Activated naive CD8-positive, alpha-beta T cell treated with anti-CD3 and anti-CD28 coated beads, Interleukin-2, amount 10 ng/mL, durations not matched to agents 7 days and 5 days (primary cell): ENCODE measurements at regions of chr2 and their contacts with region 1.

Region 1: GRCh38 chr2:38653715-38654527 is 12.0 kb upstream of the GALM start:
- DNase-seq: no peak
- ATAC-seq: peak; percentile 53
- H3K4me3 Mint-ChIP-seq: peak overlapping the region; percentile 57
- H3K27ac Mint-ChIP-seq: peak overlapping the region; percentile 91
- H3K4me1 Mint-ChIP-seq: peaks cover 38% of the 10 kb centered on the region
- H3K27me3 Mint-ChIP-seq: no peaks in the 10 kb centered on the region

Region 2: DNA sequence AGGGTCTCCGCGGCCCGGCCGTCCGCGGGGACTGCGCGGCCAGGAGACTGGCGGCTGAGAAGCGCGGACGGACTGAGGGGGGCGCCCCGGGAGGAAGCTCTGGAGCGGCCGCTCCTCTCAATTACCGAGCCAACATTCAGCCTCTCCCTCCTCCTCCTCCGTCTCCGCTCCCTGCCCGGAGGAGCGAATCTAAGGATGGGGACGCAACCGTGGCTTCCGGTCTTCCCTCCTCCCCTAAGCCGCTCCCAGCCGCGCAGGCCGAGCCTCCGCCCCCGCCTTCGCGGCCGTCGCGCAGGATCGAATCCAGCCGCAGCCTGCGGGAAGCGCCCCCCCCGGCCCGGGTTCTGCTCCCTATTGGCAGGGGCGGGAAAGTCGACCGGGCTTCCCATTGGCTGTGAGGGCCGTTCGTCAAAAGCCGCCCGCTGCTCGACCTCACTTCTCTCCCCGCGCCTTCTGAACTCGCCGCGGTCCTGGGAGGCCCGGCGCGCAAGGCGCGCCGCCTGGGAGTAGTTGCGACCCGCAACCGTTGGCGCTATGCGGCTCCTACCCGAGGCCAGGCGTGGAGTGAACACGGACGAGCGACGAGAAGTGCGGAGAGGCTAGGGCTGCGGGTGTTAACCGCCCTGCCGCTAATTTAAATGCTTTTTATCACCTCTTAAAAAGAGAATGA is 51.1 kb before region 1 on chr2 and contains the start of gene HNRNPLL:
- POLR2A ChIA-PET with region 1: interaction called, 18 read pairs
- DNase-seq: peak; percentile 96
- ATAC-seq: peak; percentile 86
- H3K4me3 Mint-ChIP-seq: peak within 1 kb of the TSS; percentile 94
- H3K27ac Mint-ChIP-seq: peak within 1 kb of the TSS; percentile 90
- H3K4me1 Mint-ChIP-seq: peaks cover 40% of the 10 kb centered on the region
- H3K27me3 Mint-ChIP-seq: no peaks in the 10 kb centered on the region
- total RNA-seq, gene HNRNPLL: 50.5 to 63.0 TPM

Region 3: DNA sequence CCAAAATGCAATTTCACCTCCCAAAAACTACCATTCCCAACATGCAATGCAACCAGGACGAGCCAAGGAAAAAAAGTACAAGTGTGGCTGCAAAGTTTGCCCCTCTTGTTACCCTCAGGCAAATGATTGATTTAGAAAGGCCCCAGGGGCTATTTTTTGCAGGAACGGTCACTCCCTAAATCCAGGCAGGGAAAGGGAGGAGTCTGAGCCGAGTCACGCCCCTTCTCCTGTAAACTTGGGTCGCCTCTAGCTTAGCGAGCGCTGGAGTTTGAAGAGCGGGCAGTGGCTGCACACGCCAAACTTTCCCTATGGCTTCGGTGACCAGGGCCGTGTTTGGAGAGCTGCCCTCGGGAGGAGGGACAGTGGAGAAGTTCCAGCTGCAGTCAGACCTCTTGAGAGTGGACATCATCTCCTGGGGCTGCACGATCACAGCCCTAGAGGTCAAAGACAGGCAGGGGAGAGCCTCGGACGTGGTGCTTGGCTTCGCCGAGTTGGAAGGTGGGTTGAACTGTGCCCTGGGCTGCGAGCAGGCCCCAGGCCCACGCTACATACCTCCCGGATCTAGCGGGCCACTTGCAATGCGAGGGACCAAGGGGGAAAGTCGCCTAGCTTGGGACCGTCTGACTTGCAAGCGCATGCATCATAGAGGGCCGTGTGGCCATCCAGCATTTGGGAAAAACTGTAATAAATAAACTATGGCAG is 12.1 kb after region 1 on chr2 and contains the start of gene GALM:
- POLR2A ChIA-PET with region 1: interaction called, 76 read pairs
- DNase-seq: peak; percentile 62
- ATAC-seq: peak; percentile 37
- H3K4me3 Mint-ChIP-seq: peak within 1 kb of the TSS; percentile 90
- H3K27ac Mint-ChIP-seq: peak within 1 kb of the TSS; percentile 92
- H3K4me1 Mint-ChIP-seq: peaks cover 51% of the 10 kb centered on the region
- H3K27me3 Mint-ChIP-seq: no peaks in the 10 kb centered on the region
- total RNA-seq, gene GALM: 28.3 to 30.2 TPM